Stomach (tissue), 19 donors: ENCODE measurements at regions of chr17 and their contacts with region 1.

Region 1: DNA sequence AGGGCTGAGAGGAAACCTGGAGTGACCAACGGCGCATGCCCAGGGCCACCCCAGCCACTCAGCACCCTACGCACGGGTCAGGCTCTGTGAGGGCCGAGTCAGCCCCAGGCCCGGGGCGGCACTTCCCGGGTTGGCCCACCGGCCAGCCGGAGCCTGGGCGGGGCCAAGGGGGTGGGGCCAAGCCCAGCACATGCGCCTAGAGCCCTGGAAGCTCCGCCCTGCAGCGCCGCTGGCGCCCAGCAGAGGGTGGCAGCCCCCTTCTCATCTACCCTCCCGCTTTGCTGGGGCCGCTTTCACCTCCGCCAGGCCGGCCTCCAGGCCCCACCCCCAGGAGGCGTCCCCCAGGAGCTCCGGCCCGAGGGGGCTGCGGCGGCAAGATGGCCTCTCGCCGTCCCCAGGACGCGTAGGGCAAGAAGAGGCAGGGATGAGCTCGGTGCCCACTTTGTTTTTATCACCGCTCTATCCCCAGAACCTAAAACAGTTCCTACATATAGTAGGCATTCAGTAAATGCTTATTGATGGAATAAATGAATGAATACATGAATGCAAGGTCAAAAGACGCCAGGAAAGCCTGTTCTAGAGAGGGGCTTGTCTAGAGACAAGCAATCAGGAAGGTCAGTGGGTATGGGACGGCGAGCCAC is 31.3 kb downstream of the MYO18A start:
- DNase-seq: peak; percentile 95 to 98
- H3K4me3 ChIP-seq: peak overlapping the region; percentile 46 to 56 (median 50)
- H3K27ac ChIP-seq: peak overlapping the region; percentile 78 to 86 (median 83)
- H3K4me1 ChIP-seq: peaks cover 20 to 51% (median 41%) of the 10 kb centered on the region in 4 donors
- H3K27me3 ChIP-seq: no peaks in the 10 kb centered on the region
- CTCF ChIP-seq: peak in 6 of 7 experiments; percentile 37 to 98 (median 96)
- EP300 ChIP-seq: no peak
- POLR2A ChIP-seq: no peak

Region 2: GRCh38 chr17:29180034-29180787 is 31.3 kb after region 1 on chr17 and contains the start of gene MYO18A:
- intact Hi-C with region 1: loop called (anchors 5 kb)
- DNase-seq: peak; percentile 85 to 95
- H3K4me3 ChIP-seq: peak within 1 kb of the TSS; percentile 60 to 66 (median 63)
- H3K27ac ChIP-seq: peak within 1 kb of the TSS; percentile 81 to 94 (median 92)
- H3K4me1 ChIP-seq: peaks cover 45 to 58% (median 55%) of the 10 kb centered on the region in 4 donors
- H3K27me3 ChIP-seq: no peaks in the 10 kb centered on the region
- CTCF ChIP-seq: peak in 5 of 7 experiments; percentile 54 to 96 (median 87)
- EP300 ChIP-seq: no peak
- POLR2A ChIP-seq: no peak
- total RNA-seq, gene MYO18A: 42.8 to 305 (median 121) TPM

Region 3: DNA sequence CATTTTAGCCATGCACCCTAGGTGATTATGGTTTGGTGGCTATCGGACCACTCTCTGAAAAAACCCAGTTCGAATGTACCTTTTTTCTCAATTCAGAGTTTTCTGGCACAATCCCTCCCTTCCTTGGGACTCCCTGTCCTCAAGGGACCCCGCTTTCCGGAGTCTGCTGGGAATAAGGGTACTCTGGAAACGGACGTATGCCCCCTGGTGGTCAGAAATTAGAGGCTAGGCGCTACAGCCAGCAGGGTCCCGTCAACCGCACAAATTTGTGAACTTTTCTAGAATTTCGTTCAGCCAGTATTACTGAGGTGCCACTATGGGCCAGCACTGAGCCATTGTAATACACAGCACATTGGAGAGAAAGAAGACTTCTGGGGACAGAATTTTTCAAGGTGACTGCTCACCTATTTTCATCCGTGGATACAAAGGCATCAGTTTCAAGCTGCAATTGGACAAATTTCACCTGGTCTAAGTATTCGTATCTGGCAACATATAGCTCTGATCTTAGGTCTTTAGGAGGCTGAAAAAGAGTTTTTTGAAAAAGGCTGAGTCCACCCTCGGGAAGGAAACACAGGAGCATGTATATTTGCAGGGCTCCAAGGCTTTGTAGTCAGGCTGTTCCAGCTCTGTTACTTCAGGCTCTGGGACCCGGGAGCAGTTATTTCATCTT is 70.6 kb after region 1 on chr17:
- intact Hi-C with region 1: loop called (anchors 5 kb)
- DNase-seq: peak; percentile 76 to 92
- H3K4me3 ChIP-seq: no peak overlapping the region
- H3K27ac ChIP-seq: no peak overlapping the region
- H3K4me1 ChIP-seq: peaks cover 0 to 9% (median 7%) of the 10 kb centered on the region in 4 donors
- H3K27me3 ChIP-seq: no peaks in the 10 kb centered on the region
- CTCF ChIP-seq: peak in 5 of 7 experiments; percentile 61 to 94 (median 89)
- EP300 ChIP-seq: no peak
- POLR2A ChIP-seq: no peak

Region 4: GRCh38 chr17:29292992-29293889 is 144.3 kb after region 1 on chr17:
- intact Hi-C with region 1: no loop called
- DNase-seq: peak; percentile 61 to 86
- H3K4me3 ChIP-seq: peak overlapping the region; percentile 85 to 99 (median 93)
- H3K27ac ChIP-seq: peak overlapping the region; percentile 97 to 100 (median 99)
- H3K4me1 ChIP-seq: peaks cover 21 to 48% (median 34%) of the 10 kb centered on the region in 4 donors
- H3K27me3 ChIP-seq: no peaks in the 10 kb centered on the region
- CTCF ChIP-seq: no peak
- EP300 ChIP-seq: no peak
- POLR2A ChIP-seq: no peak